Left cardiac atrium (tissue), 4 donors: ENCODE measurements at regions of chr12 and their contacts with region 1.

Region 1: GRCh38 chr12:16189849-16190248 is 87.6 kb downstream of the SLC15A5 start:
- DNase-seq: no peak
- ATAC-seq: no peak

Region 2: DNA sequence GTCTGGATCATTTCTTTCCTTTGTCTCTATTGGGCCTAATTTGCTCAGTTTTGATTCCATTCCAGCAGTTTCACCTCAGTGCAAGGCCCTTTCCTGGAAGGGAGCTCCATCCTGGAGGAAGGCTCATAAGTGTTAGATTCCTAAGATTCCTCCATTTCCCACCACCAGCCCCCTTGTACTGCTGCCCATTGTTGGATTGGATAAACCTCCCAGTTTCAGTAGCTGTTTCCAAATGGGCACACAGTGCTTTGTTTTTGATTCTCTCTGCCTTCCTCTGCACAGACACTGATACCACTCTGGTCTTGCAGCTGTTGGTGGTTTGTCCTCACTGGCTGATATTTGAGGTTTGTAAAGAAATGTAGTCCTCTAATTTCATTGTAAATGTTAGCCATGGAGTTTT is 71.3 kb before region 1 on chr12:
- intact Hi-C with region 1: no loop called
- DNase-seq: no peak
- ATAC-seq: no peak

Region 3: DNA sequence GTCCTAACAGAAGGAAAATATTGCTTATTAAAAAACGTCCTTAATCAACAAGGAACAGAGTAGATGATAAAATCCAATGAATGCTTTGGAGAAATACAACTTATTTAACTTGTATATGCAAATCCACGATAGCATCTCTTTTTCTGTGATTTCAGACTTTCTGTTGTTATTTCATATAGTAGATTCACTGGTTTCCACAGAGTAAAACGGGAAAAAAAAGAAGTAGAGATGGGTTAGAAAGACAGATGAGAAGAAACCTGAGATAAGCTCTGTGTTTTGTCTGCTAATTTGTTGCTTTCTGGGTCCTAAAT is 1452.4 kb after region 1 on chr12:
- intact Hi-C with region 1: loop called in 1 of 2 experiments (anchors 10 kb)
- DNase-seq: no peak
- ATAC-seq: no peak